A549 (cell line): ENCODE measurements at regions of chr1 and their contacts with region 1.

Region 1: GRCh38 chr1:24502709-24503058 is at the start of gene RCAN3:
- DNase-seq: peak; percentile 85 to 87
- ATAC-seq: peak; percentile 92 to 94
- H3K4me3 ChIP-seq: peak within 1 kb of the TSS; percentile 68
- H3K27ac ChIP-seq: peak within 1 kb of the TSS; percentile 86 to 98
- H3K4me1 ChIP-seq: peaks cover 20% of the 10 kb centered on the region
- CTCF ChIP-seq: no peak
- EP300 ChIP-seq: no peak
- POLR2A ChIP-seq: no peak
- RAD21 ChIP-seq: no peak
- polyA plus RNA-seq, gene RCAN3: 11.5 and 14.6 TPM in 2 replicates

Region 2: GRCh38 chr1:24415334-24415909 is 87.3 kb before region 1 on chr1 and contains the start of gene NIPAL3:
- CTCF ChIA-PET with region 1: interaction called, 5 read pairs
- POLR2A ChIA-PET with region 1: interaction called, 14 read pairs
- DNase-seq: peak; percentile 85 to 99
- ATAC-seq: peak; percentile 91 to 94
- H3K4me3 ChIP-seq: peak within 1 kb of the TSS; percentile 67
- H3K27ac ChIP-seq: peak within 1 kb of the TSS; percentile 64 to 95
- H3K4me1 ChIP-seq: peaks cover 51% of the 10 kb centered on the region
- CTCF ChIP-seq: peak; percentile 65
- EP300 ChIP-seq: no peak
- POLR2A ChIP-seq: no peak
- RAD21 ChIP-seq: peak; percentile 48 to 61
- polyA plus RNA-seq, gene NIPAL3: 10.4 and 14.7 TPM in 2 replicates